Panc1 (cell line): ENCODE measurements at regions of chr11 and their contacts with region 1.

Region 1: GRCh38 chr11:106520146-106520912 is 442.9 kb downstream of the AASDHPPT start:
- DNase-seq: no peak
- ATAC-seq: no peak
- H3K4me3 ChIP-seq: no peak overlapping the region
- H3K27ac ChIP-seq: no peak overlapping the region
- H3K4me1 ChIP-seq: no peaks in the 10 kb centered on the region
- H3K27me3 ChIP-seq: no peaks in the 10 kb centered on the region
- CTCF ChIP-seq: no peak

Region 2: DNA sequence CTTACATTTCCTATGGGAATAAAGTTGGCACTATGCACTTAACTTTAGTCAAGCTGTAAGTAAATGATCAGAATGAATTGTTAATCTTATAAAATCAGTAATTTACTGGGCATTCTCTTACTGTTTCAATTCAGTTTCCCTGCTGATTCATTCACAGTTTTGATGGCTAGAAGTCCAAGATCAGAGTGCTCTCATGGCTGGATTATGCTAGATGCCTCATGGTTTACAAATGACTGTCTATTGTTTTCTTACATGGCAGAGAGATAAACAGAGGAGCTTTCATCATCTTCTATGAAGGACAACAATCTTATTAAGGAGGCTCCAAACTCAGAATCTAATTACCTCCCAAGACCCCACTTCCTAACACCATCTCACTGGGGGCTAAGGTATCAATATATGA is 1245.7 kb before region 1 on chr11:
- CTCF ChIA-PET with region 1: no interaction called
- POLR2A ChIA-PET with region 1: no interaction called
- in situ Hi-C with region 1: no loop called
- intact Hi-C with region 1: no loop called
- DNase-seq: no peak
- ATAC-seq: no peak
- H3K4me3 ChIP-seq: no peak overlapping the region
- H3K27ac ChIP-seq: no peak overlapping the region
- H3K4me1 ChIP-seq: no peaks in the 10 kb centered on the region
- H3K27me3 ChIP-seq: no peaks in the 10 kb centered on the region
- CTCF ChIP-seq: no peak

Region 3: DNA sequence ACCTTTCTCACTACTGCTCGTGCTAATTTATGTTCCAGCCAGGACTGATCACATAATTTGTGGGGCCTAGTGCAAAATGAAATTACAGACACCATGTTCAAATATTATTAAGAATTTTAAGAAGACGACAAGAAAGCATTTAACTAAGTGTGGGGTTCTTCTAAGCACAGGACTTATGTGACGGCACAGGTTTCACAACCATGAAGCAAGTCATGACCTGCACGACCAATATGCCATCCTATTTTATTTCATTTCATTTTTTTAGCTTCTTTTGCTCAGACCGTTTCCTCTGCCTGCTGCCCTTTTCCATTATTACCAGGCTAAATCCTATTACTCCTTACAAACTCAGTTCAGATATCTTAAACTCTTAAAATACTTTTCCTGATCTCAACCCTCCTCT is 19.7 kb after region 1 on chr11:
- CTCF ChIA-PET with region 1: no interaction called
- POLR2A ChIA-PET with region 1: no interaction called
- in situ Hi-C with region 1: no loop called
- intact Hi-C with region 1: loop called (anchors 1 kb)
- DNase-seq: no peak
- ATAC-seq: no peak
- H3K4me3 ChIP-seq: no peak overlapping the region
- H3K27ac ChIP-seq: no peak overlapping the region
- H3K4me1 ChIP-seq: no peaks in the 10 kb centered on the region
- H3K27me3 ChIP-seq: no peaks in the 10 kb centered on the region
- CTCF ChIP-seq: no peak